PC-9 (cell line): ENCODE measurements at regions of chr6 and their contacts with region 1.

Region 1: DNA sequence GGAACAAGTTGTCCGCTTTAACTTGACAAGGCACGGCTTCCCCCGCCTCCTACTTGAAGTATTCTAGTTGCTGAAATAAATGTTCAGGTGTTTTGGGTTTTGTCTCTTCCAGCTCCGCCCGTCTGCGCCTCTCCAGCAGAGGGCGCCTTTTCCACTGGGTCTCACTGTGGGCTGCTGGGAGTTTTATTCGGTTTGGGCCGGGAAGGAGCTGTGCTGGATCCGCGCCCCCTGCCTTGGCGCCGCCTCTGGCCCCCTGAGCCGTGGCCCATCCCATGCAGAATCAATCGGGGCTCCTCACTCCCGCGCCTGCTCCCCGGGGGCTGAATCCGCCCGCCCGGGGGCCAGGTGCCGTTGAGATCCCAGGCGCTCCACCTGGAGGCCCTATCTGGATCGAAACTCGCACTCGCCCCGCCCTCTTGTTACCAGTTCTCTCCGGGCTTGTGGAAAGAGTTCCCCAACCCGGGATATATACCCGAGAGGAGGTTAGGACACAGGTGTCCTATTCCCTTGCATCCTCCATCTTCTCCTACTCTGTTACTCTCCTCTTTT is 51.0 kb upstream of the TCF21 start:
- DNase-seq: peak; percentile 55 to 84
- H3K4me3 ChIP-seq: peak overlapping the region; percentile 61
- H3K27ac ChIP-seq: peak overlapping the region; percentile 76
- H3K4me1 ChIP-seq: no peaks in the 10 kb centered on the region; the same call in 1 of the 2 replicates
- H3K27me3 ChIP-seq: no peaks in the 10 kb centered on the region
- CTCF ChIP-seq: peak; percentile 98

Region 2: DNA sequence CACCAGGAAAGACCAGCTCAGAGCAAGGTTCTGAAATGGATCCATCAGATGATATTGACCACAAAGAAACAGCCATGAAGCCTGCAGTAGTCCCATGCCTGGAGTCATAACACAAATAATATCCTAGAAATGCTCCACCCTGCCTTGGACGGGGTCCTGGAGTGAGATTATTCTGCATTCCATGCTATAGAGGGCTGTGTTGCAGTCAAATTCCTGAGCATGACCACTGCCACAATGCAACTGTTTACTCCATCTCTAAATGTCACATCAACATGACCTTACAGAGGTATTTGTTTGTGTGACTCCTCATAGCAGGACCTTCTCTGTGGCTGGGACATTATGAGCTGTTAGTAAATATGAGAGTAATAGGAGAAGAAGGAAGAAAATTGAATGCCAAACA is 206.5 kb before region 1 on chr6:
- CTCF ChIA-PET with region 1: no interaction called
- POLR2A ChIA-PET with region 1: interaction called, 3 read pairs
- intact Hi-C with region 1: loop called (anchors 1 kb)
- DNase-seq: peak; percentile 24 to 56
- H3K4me3 ChIP-seq: no peak overlapping the region
- H3K27ac ChIP-seq: no peak overlapping the region
- H3K4me1 ChIP-seq: peaks cover 24% of the 10 kb centered on the region
- H3K27me3 ChIP-seq: no peaks in the 10 kb centered on the region
- CTCF ChIP-seq: no peak; the same call in 1 of the 2 replicates

Region 3: DNA sequence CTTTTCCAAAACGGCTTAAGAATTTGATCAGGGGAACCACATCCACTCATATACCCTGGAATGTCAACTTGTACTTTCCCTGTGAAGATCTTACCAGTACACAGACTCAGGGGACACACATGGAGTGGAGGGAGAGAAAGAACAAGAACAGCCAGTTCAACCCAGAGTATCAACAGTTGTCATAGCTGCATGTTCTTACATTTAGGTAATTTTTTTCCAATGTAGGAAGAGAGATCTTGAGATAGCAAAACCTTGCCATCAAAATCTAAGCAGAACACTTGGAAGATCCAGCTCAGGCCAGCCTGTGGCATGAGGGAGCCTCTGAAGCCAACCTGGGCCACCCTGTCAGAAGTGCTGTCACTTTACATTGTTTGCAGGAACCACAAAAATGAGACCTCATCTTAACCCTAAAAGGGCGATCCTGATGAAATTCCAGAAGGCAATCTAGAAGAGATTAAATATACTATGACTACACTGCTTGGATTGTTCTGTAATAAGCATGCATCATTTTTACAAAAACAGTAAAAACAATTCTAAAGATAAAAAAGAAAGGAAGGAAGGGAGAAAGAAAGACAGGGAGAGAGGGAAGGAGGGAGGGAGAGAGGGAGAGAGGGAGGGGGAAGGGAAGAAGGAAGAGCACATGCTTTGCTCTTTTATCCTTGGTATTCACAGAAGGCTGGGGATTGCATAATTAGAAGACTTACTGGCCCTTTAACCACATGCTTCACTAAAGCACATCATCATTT is 73.7 kb before region 1 on chr6:
- CTCF ChIA-PET with region 1: no interaction called
- POLR2A ChIA-PET with region 1: no interaction called
- intact Hi-C with region 1: loop called (anchors 1 kb)
- DNase-seq: peak; percentile 43 to 61
- H3K4me3 ChIP-seq: no peak overlapping the region
- H3K27ac ChIP-seq: no peak overlapping the region
- H3K4me1 ChIP-seq: peaks cover 12% of the 10 kb centered on the region
- H3K27me3 ChIP-seq: no peaks in the 10 kb centered on the region
- CTCF ChIP-seq: no peak

Region 4: GRCh38 chr6:133817460-133818047 is 20.3 kb before region 1 on chr6:
- CTCF ChIA-PET with region 1: no interaction called
- POLR2A ChIA-PET with region 1: no interaction called
- intact Hi-C with region 1: no loop called
- DNase-seq: no peak
- H3K4me3 ChIP-seq: no peak overlapping the region
- H3K27ac ChIP-seq: no peak overlapping the region
- H3K4me1 ChIP-seq: no peaks in the 10 kb centered on the region
- H3K27me3 ChIP-seq: no peaks in the 10 kb centered on the region
- CTCF ChIP-seq: peak; percentile 70

Region 5: DNA sequence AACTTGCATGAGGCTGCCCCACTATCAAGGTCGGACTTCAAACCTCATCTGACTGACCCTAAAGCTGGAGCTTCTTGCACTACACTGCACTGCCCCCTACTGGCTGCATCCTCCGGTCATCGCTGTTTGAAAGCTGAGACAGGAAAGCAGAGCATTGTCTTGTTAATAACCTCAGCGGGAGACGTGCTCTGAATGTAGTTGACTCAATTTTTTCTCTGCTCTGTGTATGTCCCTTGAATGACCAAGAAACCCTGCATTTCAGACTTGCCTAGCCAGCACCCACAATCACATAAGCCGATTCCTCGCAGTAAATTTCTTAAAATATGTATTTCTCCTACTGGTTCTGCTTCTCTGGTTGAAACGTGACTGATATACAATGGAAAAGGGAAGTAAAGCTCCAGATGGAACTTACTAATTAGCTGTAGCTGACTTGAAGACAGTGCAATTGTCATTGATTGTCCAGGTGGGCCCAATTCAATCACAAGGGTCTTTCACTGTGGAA is 78.8 kb after region 1 on chr6:
- CTCF ChIA-PET with region 1: interaction called, 8 read pairs
- POLR2A ChIA-PET with region 1: interaction called, 3 read pairs
- intact Hi-C with region 1: loop called (anchors 1 kb)
- DNase-seq: peak; percentile 71 to 82
- H3K4me3 ChIP-seq: peak overlapping the region; percentile 6; the same call in 1 of the 2 replicates
- H3K27ac ChIP-seq: no peak overlapping the region
- H3K4me1 ChIP-seq: no peaks in the 10 kb centered on the region
- H3K27me3 ChIP-seq: no peaks in the 10 kb centered on the region
- CTCF ChIP-seq: peak; percentile 100

Region 6: DNA sequence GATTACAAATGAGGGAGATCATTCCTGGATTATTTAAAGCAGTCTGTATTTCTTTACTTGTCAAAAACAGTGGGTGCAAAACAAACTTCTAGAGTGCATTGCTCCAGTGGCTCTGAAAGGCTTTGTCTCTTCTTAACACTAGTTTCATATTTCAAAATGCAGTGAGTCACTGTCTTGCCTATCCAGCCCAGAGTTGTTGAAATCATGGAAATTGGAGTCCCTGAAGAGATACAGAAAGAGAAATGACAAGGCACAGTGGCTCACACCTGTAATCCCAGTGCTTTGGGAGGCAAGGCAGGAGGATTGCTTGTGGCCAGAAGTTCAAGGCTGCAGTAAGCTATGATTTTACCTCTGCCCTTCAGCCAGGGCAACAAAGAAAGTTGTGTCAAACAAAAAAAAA is 203.2 kb after region 1 on chr6:
- CTCF ChIA-PET with region 1: no interaction called
- POLR2A ChIA-PET with region 1: no interaction called
- intact Hi-C with region 1: no loop called
- DNase-seq: peak; percentile 33 to 89
- H3K4me3 ChIP-seq: no peak overlapping the region
- H3K27ac ChIP-seq: peak overlapping the region; percentile 65
- H3K4me1 ChIP-seq: peaks cover 27% of the 10 kb centered on the region
- H3K27me3 ChIP-seq: no peaks in the 10 kb centered on the region
- CTCF ChIP-seq: no peak

Region 7: DNA sequence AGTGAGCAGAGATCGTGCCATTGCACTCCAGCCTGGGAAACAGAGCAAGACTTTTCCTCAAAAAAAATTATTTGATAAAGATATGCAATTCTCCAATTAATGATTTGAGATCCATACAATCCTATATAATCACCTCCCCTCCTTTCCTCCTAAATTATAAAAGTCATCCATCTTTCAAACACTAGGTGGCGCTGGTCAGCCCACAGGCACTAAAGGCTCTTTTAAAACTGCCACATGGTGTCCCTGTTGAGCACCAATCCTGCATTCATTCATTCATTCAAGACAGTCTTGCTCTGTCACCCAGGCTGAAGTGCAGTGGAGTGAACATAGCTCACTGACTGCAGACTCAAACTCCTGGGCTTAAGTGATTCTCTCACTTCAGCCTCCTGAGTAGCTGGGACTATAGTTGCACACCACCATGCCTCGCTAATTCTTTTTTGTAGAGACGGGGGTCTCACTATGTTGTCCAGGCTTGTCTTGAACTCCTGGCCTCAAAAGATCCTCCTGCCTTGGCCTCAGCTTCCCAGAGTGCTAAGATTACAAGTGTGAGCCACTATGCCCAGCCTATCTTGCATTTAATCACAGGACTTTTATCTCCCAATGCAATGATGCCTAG is 273.3 kb after region 1 on chr6:
- CTCF ChIA-PET with region 1: no interaction called
- POLR2A ChIA-PET with region 1: no interaction called
- intact Hi-C with region 1: no loop called
- DNase-seq: peak; percentile 15 to 59
- H3K4me3 ChIP-seq: no peak overlapping the region
- H3K27ac ChIP-seq: no peak overlapping the region
- H3K4me1 ChIP-seq: 0 out of 2 replicates have a peak, but pooled peaks cover 3% of the 10 kb centered on the region
- H3K27me3 ChIP-seq: no peaks in the 10 kb centered on the region
- CTCF ChIP-seq: peak; percentile 95